H1 (cell line): ENCODE measurements at regions of chr1 and their contacts with region 1.

Region 1: DNA sequence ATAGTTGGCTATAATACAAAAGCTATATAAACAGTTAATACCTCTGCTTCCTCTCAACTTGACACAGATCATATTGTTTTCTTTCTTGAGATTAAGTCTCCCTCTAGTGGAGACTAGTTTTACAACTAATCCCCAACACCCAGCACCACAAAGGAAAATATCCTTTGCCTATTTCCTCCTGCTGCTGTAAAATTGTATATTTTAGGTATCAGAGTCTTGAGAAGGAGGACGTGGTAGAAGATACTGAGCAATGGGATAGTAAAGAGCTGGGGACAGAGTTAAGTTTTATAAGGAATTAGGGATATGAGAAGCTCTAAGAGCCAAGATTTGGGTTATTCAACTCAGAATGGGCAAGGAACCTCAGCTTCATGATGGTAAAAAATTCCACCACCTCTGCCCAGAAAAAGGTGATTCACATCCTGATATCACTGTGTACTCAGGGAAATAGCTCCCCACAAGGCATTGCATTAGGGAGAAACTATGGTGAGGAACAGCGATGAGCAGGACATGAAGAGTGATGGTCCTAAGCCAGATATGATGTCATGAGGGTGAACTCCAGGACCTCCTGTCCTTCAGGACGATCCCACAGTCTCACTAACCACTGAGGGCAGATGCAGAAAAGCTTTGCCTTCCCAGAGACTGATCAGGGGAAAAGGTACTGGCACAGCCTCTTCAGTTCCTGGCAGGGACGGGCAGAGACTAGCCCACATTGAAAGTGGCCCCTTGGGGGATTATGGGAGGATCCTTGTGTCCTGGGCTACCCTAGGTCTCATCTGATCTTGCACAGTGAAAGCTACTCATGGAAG is 14.7 kb upstream of the CFAP126 start:
- DNase-seq: no peak
- H3K4me3 ChIP-seq: no peak overlapping the region
- H3K27ac ChIP-seq: no peak overlapping the region
- H3K4me1 ChIP-seq: no peaks in the 10 kb centered on the region
- H3K27me3 ChIP-seq: no peaks in the 10 kb centered on the region
- CTCF ChIP-seq: peak in 2 of 3 experiments; percentile 39 to 52; a peak in 2 of 4 replicates
- EP300 ChIP-seq: no peak
- POLR2A ChIP-seq: no peak
- RAD21 ChIP-seq: peak; percentile 70 to 73

Region 2: DNA sequence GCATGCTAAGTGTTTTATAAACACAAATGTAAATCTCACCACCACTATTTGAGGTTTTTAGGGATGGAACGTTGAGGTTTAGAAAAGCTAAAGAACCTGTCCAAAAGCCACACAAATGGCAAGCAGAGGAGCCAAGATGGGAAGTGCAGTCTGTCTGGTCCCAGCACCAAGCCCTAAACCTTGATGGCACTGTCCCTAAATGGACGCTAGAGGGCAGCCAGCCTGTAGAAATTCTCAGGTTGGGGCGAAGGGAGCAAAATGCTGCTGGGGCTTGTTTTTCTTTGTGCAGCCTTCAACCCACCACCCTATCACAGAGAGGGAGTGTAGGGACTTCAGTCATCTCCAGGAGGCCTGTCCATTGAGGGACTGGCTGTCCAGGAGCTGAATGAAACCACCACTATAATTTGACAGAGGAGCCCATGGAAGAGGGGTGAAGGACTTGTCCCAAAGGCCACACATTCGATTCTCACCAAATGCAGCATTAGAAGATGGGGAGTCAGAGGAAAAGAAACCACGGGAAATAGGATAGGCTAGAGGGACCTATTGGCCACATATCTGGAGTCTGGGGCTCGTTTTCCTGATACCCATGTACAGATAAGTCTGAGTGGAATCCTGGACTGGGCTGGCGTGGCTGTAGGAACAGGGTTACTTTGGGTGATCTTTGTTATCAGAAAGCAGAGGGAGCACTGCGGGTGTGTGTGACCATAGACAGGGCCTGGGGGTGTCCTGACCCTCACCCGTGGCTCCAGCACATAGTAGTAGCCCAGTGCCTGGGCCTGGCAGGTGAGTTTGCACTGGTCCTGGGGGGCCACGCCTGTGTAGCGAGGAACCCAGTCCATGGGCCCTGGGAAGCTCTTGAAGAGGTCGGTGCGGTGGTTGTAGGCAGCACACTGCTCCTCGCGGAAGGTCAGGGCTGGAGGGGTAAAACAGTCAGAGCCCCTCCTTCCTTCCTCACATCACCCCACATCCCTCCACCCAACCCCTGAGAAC is 189.6 kb before region 1 on chr1:
- CTCF ChIA-PET with region 1: interaction called, 42 read pairs
- POLR2A ChIA-PET with region 1: interaction called, 3 read pairs
- DNase-seq: peak in 1 of 2 experiments; percentile 70
- H3K4me3 ChIP-seq: no peak overlapping the region
- H3K27ac ChIP-seq: no peak overlapping the region
- H3K4me1 ChIP-seq: peaks cover 3 to 12% (median 11%) of the 10 kb centered on the region in 4 experiments
- H3K27me3 ChIP-seq: no peaks in the 10 kb centered on the region; a peak in 1 of 7 replicates
- CTCF ChIP-seq: peak; percentile 83 to 97 (median 83)
- EP300 ChIP-seq: no peak
- POLR2A ChIP-seq: no peak
- RAD21 ChIP-seq: peak; percentile 81 to 84

Region 3: DNA sequence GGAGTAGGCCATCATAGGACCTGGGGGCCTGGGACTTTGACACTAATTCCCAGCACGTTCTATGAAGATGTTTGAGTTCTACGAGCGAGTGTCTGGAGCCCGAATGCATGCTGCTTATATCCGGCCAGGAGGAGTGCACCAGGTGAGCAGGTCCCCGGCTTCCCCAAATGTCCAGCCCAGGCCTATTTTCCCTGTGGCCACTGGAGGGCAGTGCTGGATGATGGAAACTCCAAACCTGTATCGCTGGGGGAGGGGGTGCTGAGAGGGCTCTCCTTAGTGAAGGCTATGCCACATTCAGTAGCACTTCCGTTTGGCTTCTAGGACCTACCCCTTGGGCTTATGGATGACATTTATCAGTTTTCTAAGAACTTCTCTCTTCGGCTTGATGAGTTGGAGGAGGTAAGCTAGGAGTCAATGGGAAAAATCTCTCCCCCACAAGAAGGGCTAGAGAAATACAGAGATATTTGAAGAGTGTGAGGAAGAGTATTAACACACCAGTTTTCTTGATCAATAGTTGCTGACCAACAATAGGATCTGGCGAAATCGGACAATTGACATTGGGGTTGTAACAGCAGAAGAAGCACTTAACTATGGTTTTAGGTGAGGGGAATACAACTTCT is 172.5 kb before region 1 on chr1:
- CTCF ChIA-PET with region 1: interaction called, 62 read pairs
- POLR2A ChIA-PET with region 1: interaction called, 3 read pairs
- DNase-seq: peak; percentile 67 to 92
- H3K4me3 ChIP-seq: no peak overlapping the region
- H3K27ac ChIP-seq: 0 out of 2 replicates have a peak overlapping the region, but pooled peaks have one; percentile 5
- H3K4me1 ChIP-seq: peaks cover 0 to 4% (median 1%) of the 10 kb centered on the region in 4 experiments; a peak in 4 of 7 replicates
- H3K27me3 ChIP-seq: no peaks in the 10 kb centered on the region
- CTCF ChIP-seq: peak; percentile 89 to 98 (median 97)
- EP300 ChIP-seq: 0 out of 3 replicates have a peak, but pooled peaks of 1 of the 2 experiments have one; percentile 41
- POLR2A ChIP-seq: no peak
- RAD21 ChIP-seq: peak; percentile 94 to 98

Region 4: DNA sequence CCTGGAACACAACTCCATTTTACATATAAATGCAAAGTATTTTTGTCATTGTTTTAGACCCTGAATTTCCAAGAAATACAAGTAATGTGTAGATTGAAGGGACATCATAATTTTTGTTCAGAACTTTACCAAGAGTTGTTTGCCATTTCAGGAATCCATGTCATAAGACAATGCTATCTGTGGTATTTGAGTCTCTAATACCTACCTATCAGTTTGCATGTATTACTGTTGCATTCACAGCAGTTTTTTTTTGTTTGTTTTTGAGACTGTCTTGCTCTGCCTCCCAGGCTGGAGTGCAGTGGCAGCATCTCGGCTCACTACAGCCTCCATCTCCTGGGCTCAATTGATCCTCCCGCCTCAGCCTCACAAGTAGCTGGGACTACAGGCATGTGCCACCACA is 89.8 kb before region 1 on chr1:
- CTCF ChIA-PET with region 1: interaction called, 11 read pairs
- POLR2A ChIA-PET with region 1: no interaction called
- DNase-seq: no peak
- H3K4me3 ChIP-seq: no peak overlapping the region
- H3K27ac ChIP-seq: no peak overlapping the region
- H3K4me1 ChIP-seq: peaks cover 0 to 2% (median 0%) of the 10 kb centered on the region in 4 experiments; a peak in 1 of 7 replicates
- H3K27me3 ChIP-seq: no peaks in the 10 kb centered on the region
- CTCF ChIP-seq: no peak
- EP300 ChIP-seq: no peak
- POLR2A ChIP-seq: no peak
- RAD21 ChIP-seq: no peak

Region 5: DNA sequence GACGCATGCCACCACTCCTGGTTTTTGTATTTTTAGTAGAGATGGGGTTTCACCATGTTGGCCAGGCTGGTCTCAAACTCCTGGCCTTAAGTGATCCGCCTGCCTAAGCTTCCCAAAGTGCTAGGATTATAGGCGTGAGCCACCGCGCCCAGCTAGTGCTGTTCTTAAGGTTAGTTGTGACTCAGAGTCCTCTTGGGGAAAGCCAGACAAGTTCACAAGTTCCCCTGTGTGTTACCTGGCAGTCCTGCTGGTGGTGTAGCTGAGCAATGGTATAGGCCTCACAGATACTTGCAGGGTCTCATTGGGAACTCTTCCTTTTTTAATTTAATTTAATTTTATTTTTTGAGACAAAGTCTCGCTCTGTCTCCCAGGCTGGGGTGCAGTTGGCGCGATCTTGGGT is 25.3 kb before region 1 on chr1:
- CTCF ChIA-PET with region 1: interaction called, 10 read pairs
- POLR2A ChIA-PET with region 1: no interaction called
- DNase-seq: no peak
- H3K4me3 ChIP-seq: no peak overlapping the region
- H3K27ac ChIP-seq: no peak overlapping the region
- H3K4me1 ChIP-seq: no peaks in the 10 kb centered on the region
- H3K27me3 ChIP-seq: no peaks in the 10 kb centered on the region
- CTCF ChIP-seq: no peak
- EP300 ChIP-seq: no peak
- POLR2A ChIP-seq: no peak
- RAD21 ChIP-seq: no peak

Region 6: GRCh38 chr1:161393151-161393550 is 10.7 kb after region 1 on chr1:
- CTCF ChIA-PET with region 1: interaction called, 16 read pairs
- POLR2A ChIA-PET with region 1: interaction called, 4 read pairs
- DNase-seq: no peak
- H3K4me3 ChIP-seq: no peak overlapping the region
- H3K27ac ChIP-seq: no peak overlapping the region
- H3K4me1 ChIP-seq: peaks cover 0 to 1% (median 0%) of the 10 kb centered on the region in 4 experiments; a peak in 1 of 7 replicates
- H3K27me3 ChIP-seq: no peaks in the 10 kb centered on the region
- CTCF ChIP-seq: no peak
- EP300 ChIP-seq: no peak
- POLR2A ChIP-seq: no peak
- RAD21 ChIP-seq: no peak